Activated T-helper 1 cell treated with anti-CD3 and anti-CD28 coated beads, Interleukin-12 subunit alpha, Interleukin-12 subunit beta, Interleukin-2, Interleukin-4 antibody, amounts not matched to agents 30 ng/mL and 10 ng/mL and 1 ng/mL, durations not matched to agents 14 hours and 24 hours and 36 hours (primary cell): ENCODE measurements at regions of chr10 and their contacts with region 1.

Region 1: DNA sequence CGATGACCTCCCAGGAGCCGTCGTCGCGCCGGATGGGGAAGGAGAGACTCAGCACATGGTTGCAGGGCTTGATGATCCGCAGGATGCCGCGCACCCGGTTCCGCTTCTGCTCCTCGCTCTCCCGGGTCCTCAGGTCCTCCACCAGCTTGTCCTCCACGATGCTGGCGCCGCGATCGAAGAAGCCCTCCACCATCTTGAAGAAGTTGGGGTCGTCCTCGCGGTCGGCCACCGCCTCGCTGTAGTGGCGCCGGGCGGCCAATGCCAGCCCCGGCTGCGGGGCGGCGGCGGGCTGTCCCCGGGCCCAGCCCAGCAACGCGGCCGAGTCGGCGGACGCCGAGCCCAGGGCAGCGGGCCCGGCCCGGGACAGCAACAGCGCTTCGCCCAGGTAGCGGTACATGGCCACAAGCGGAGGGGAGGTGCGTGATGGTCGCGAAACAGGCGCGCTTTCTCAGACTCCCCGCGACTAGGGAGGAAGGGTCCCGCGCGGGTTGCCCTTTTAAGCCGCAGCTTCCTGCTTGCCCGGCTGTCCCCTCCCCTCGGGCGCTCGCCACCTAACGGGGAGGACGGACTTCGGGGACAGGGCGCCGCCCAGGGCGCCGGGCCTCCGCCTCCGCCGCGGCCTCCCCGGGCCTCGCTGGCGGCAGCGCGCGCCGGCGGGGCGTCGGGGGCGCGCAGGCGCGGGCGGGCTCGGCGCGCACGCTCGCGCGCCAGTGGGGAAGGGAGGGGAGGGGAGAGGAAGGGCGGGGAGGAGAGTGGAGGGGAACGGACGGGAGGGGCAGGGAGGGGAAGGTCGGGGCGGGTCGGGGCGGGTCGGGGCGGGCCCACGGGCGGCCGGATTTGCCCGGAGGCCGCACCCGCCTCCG is at the starts of genes GLUD1 and SHLD2:
- DNase-seq: peak; percentile 91
- H3K4me3 Mint-ChIP-seq: peak within 1 kb of the TSS; percentile 98
- H3K27ac Mint-ChIP-seq: peak within 1 kb of the TSS; percentile 95
- H3K4me1 Mint-ChIP-seq: peaks cover 45% of the 10 kb centered on the region
- H3K27me3 Mint-ChIP-seq: no peaks in the 10 kb centered on the region
- total RNA-seq, gene GLUD1: 116 and 125 TPM in 2 replicates
- total RNA-seq, gene SHLD2: 41.3 and 42.1 TPM in 2 replicates

Region 2: DNA sequence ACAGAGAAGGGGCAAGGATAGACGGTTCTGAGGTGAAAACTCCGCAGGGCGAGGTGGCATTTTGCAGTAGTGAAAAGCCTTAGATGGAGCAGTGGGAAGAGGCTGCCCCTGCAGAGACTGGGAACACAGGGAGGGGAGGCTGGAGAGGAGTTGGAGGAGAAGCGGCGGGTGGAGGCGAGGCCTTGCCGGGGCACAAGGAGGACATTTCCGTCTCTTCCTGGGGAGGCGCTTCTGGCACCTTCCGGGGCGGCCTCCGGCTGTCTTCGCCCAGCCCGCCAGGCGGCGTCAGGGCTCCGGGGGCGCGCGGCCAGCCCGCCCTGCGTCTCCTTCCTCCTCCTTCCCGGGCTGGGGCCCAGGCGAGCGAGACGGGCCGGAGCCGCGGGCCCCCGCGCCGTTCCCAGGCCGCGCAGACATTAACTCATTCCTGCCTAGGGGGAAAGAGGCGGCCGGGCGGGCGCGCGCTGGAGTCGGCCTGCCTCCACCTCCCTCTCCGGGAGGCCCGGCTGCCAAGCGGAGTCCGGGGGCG is 383.6 kb before region 1 on chr10:
- intact Hi-C with region 1: loop called (anchors 2 kb)
- DNase-seq: peak; percentile 84
- H3K4me3 Mint-ChIP-seq: peak overlapping the region; percentile 88
- H3K27ac Mint-ChIP-seq: peak overlapping the region; percentile 97
- H3K4me1 Mint-ChIP-seq: peaks cover 17% of the 10 kb centered on the region
- H3K27me3 Mint-ChIP-seq: no peaks in the 10 kb centered on the region

Region 3: GRCh38 chr10:86936661-86937501 is 157.7 kb before region 1 on chr10:
- intact Hi-C with region 1: loop called (anchors 2 kb)
- DNase-seq: no peak
- H3K4me3 Mint-ChIP-seq: no peak overlapping the region
- H3K27ac Mint-ChIP-seq: no peak overlapping the region
- H3K4me1 Mint-ChIP-seq: no peaks in the 10 kb centered on the region
- H3K27me3 Mint-ChIP-seq: peaks cover 3% of the 10 kb centered on the region

Region 4: GRCh38 chr10:87054373-87055295 is 40.0 kb before region 1 on chr10:
- intact Hi-C with region 1: loop called (anchors 2 kb)
- DNase-seq: no peak
- H3K4me3 Mint-ChIP-seq: no peak overlapping the region
- H3K27ac Mint-ChIP-seq: no peak overlapping the region
- H3K4me1 Mint-ChIP-seq: no peaks in the 10 kb centered on the region
- H3K27me3 Mint-ChIP-seq: no peaks in the 10 kb centered on the region

Region 5: DNA sequence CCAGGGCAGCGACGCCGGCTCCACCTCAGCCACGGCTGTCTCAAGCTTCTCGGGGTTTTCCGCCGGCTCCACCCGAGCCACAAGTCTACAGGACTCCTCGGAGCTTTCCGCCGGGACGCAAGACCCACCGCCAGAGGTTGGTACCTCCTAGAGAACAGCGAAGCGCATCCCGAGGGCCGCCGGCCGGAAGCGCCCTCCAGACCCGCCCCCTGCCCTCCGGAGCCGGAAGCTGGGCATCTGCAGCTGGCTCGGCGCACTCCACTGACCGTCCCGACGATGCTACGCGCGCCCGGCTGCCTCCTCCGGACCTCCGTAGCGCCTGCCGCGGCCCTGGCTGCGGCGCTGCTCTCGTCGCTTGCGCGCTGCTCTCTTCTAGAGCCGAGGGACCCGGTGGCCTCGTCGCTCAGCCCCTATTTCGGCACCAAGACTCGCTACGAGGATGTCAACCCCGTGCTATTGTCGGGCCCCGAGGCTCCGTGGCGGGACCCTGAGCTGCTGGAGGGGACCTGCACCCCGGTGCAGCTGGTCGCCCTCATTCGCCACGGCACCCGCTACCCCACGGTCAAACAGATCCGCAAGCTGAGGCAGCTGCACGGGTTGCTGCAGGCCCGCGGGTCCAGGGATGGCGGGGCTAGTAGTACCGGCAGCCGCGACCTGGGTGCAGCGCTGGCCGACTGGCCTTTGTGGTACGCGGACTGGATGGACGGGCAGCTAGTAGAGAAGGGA is 410.2 kb after region 1 on chr10 and contains the start of gene MINPP1:
- intact Hi-C with region 1: loop called (anchors 2 kb)
- DNase-seq: peak; percentile 68
- H3K4me3 Mint-ChIP-seq: peak within 1 kb of the TSS; percentile 90
- H3K27ac Mint-ChIP-seq: peak within 1 kb of the TSS; percentile 86
- H3K4me1 Mint-ChIP-seq: peaks cover 41% of the 10 kb centered on the region
- H3K27me3 Mint-ChIP-seq: peaks cover 14% of the 10 kb centered on the region
- total RNA-seq, gene MINPP1: 12.3 and 13.8 TPM in 2 replicates